Right ventricle myocardium superior (tissue), 1 donor: ENCODE measurements at regions of chr15 and their contacts with region 1.

Region 1: DNA sequence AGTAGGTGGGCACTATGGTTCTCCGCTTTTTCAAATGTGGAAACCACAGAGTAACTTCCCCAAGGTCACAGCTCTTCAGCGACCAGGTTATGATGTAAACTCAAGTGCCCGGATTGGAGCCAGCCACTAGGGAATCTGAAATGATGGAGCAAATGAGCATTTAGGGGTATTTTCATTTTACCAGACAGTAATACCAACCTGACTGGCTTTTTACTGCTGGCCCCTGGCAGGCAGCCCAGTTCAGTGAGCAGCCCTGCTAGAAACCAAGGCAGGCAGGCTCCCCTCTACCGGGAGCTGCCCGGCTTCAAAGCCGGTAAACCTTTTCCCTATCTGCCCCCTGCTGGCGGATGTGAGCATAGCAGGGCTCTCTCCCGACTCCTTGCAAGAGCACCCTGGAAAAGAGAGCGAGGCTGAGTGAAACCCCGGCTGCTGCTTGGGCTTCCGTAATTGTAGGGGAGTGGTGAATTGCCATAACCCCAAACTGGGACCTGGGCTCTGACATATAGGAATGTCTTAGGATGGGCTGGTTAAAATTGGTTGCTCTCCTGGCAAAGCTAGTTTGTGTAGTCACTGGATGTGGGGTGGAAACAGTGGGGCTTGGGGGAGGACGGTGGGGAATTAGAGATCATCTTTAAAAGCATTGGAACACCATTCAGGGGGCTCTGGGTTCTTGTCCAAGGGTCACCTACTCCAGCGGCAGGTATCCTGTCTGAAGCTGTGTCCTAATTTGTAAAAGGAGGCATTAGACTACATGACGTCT is 98.0 kb upstream of the TNFAIP8L3 start:
- DNase-seq: peak; percentile 93
- ATAC-seq: peak; percentile 82

Region 2: GRCh38 chr15:51162865-51163762 is 29.6 kb before region 1 on chr15:
- intact Hi-C with region 1: loop called (anchors 1 kb)
- DNase-seq: peak; percentile 68
- ATAC-seq: peak; percentile 97